Common myeloid progenitor, CD34-positive (primary cell): ENCODE measurements at regions of chr7 and their contacts with region 1.

Region 1: DNA sequence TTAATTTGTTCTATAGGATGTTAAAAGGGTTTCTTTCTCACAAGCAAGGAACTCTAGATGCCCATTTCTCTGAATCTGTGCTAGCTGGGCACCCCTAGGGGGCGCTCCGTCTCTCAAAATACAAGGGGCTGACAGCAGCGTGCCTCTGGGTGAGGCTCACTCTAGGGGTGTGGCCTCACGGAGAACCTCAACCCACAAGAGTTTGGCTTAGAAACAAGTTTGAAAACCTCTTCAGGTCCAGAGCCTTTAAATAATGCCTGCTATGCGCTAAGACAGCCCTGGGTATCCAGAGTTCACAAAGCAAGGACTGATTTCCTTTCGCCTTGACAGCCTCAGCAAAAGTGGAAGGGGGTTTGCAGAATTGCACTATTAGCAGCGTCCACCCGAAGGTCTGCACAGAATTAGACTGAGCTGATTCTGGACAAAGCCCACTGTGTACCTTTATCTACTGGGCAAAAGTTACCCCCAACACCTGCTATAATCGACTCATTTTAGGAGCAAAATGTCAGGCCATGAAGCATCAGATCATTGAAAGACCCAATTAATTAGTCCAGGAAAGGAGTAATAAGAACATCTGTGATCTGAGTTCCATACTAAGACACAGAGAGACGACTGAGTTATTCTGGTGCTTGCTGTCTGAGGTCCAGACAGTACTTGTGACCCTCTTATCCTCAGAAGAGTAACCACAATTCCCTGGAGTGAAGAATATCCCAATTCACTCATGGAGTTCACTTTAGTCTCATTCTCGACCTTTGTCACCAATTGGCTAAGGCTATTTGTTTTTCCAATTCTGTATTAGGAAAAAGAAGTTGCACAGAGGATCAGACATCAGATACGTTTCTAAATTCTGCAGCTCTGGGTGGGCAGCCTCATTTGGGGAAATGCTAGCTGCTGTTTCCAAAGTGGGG is 574 bp upstream of the CPED1 start:
- DNase-seq: peak; percentile 94 to 97 (median 96)
- H3K4me3 ChIP-seq: peak overlapping the region; percentile 26 to 87 (median 77)
- H3K27ac ChIP-seq: peak overlapping the region in 1 of 2 experiments; percentile 85
- H3K4me1 ChIP-seq: peaks cover 10 to 53% (median 28%) of the 10 kb centered on the region in 4 experiments
- H3K27me3 ChIP-seq: no peaks in the 10 kb centered on the region

Region 2: DNA sequence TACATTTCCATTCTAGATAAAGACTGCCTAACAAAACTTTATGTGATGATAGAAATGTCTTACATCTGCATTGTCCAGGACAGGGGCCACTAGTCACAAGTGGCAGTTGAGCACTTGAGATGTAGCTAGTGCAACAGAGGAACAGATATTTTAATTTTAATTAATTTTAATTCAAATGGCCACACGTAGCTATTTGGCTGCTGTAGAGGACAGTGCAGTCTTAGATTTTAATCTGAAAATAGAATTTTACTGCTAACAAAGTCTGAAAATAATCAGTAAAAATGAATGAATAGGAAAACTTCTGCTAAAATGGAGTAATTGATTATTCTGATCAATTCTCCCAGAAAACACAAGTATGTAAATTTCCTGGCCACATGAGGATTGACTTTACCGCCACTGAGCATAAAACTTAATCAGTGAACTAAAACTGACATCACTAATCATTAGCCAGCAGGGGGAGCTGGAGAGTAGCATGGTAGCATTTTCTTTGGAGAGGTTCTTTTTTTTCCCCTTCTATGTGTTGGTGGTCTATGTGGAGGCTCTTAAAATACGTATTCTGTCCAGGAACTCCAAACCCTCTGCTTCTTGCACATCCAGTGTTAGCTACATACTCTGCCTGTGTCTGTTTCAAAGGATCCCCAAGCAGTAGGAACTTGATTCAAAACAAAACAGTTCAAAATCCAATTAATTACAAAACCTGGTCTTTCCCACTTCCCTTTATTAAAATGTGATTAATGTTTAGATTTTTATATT is 182.1 kb before region 1 on chr7:
- CTCF ChIA-PET with region 1: interaction called, 11 read pairs
- POLR2A ChIA-PET with region 1: no interaction called
- DNase-seq: peak; percentile 75 to 85 (median 78)
- H3K4me3 ChIP-seq: peak overlapping the region in 1 of 7 experiments; percentile 14
- H3K27ac ChIP-seq: no peak overlapping the region
- H3K4me1 ChIP-seq: no peaks in the 10 kb centered on the region
- H3K27me3 ChIP-seq: no peaks in the 10 kb centered on the region

Region 3: DNA sequence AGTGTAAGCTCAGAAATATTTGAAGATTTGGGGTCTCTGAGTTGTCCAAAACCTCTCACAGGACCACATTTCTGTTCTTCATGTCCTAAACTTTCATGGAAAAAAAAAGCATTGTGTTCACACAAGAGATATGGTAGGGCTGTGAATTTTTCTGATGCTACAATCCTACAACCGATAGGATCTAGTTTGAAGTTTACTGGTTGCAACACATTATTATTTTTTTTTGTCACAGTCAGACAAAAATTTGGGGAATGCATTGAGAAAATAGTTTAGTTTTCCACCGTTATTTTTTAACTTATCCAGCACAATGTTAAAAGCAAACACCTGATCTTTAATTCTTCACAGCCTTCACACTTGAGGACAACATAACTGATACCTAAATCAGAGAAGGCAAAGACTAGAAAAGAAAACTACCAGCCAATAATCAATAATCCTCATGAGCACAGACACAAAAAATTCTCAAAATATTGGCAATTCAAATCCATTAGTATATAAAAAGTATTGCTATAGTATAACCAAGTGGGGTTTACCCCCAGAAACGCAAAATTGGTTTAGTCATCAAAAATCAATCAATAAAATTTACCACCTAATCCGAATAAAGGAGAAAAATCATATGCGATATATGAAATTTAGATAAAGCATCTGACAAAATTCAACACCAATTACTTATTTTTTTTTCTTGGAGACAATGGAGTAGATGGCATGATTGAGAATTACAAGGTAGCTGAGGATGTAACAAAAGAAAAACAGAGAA is 48.8 kb before region 1 on chr7:
- CTCF ChIA-PET with region 1: no interaction called
- POLR2A ChIA-PET with region 1: no interaction called
- DNase-seq: no peak
- H3K4me3 ChIP-seq: no peak overlapping the region
- H3K27ac ChIP-seq: no peak overlapping the region
- H3K4me1 ChIP-seq: peaks cover 0 to 10% (median 0%) of the 10 kb centered on the region in 4 experiments
- H3K27me3 ChIP-seq: no peaks in the 10 kb centered on the region

Region 4: GRCh38 chr7:121041516-121042148 is 53.7 kb after region 1 on chr7:
- CTCF ChIA-PET with region 1: interaction called, 21 read pairs
- POLR2A ChIA-PET with region 1: no interaction called
- DNase-seq: peak in 2 of 3 donors; percentile 13 to 40
- H3K4me3 ChIP-seq: peak overlapping the region in 2 of 7 experiments; percentile 13 to 55
- H3K27ac ChIP-seq: peak overlapping the region in 1 of 2 experiments; percentile 67
- H3K4me1 ChIP-seq: peaks cover 0 to 9% (median 5%) of the 10 kb centered on the region in 4 experiments
- H3K27me3 ChIP-seq: no peaks in the 10 kb centered on the region

Region 5: DNA sequence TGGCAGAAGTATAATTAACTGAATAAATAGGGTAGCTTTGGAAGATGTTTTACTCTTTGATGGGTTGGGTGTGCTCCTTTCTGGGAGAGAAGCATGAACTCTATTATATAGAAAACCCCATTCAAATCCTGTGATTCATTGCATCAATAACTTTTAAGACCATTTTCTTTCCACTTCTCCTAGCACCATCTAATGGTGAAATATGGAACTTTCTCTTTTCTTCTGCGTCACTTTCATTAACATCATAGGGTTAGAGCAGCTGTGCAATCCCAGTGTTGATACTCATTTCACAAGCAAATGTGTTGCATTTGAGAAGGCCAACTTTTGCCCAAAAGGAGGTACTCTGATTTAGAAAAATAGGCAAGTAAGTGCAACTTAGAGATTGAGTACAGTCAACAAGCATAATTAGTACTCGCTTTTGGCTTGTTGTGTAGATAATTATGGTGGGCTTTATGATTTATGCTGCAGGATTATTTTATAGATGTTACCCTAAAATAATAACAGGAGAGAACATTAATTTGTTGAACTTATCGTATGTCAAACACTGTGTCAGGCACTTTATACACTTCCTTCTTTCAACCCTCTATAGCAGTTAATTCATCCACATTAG is 93.5 kb after region 1 on chr7:
- CTCF ChIA-PET with region 1: interaction called, 193 read pairs
- POLR2A ChIA-PET with region 1: interaction called, 3 read pairs
- DNase-seq: peak; percentile 56 to 82 (median 77)
- H3K4me3 ChIP-seq: no peak overlapping the region
- H3K27ac ChIP-seq: no peak overlapping the region
- H3K4me1 ChIP-seq: peaks cover 0 to 8% (median 0%) of the 10 kb centered on the region in 4 experiments
- H3K27me3 ChIP-seq: no peaks in the 10 kb centered on the region

Region 6: DNA sequence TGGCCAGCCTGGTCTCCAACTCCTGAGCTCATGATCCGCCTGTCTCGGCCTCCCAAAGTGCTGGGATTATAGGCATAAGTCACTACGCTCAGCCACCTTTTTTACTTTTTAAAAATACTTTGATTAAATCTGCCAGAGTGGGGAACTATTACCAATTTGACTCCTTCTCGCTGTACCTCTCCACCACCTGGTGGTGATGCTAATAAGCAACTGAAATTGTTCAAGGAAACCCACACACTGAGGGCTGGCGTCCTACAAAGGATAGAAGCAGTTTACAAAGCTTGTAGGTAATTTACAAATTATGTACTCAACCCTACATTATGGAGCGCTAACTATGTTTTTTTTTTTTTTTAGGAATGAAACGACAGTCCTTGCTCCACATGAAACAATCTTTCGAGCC is 111.6 kb after region 1 on chr7:
- CTCF ChIA-PET with region 1: interaction called, 16 read pairs
- POLR2A ChIA-PET with region 1: no interaction called
- DNase-seq: peak; percentile 5 to 35 (median 15)
- H3K4me3 ChIP-seq: no peak overlapping the region
- H3K27ac ChIP-seq: no peak overlapping the region
- H3K4me1 ChIP-seq: no peaks in the 10 kb centered on the region
- H3K27me3 ChIP-seq: no peaks in the 10 kb centered on the region

Region 7: GRCh38 chr7:121138262-121138933 is 150.5 kb after region 1 on chr7:
- CTCF ChIA-PET with region 1: no interaction called
- POLR2A ChIA-PET with region 1: no interaction called
- DNase-seq: no peak
- H3K4me3 ChIP-seq: no peak overlapping the region
- H3K27ac ChIP-seq: peak overlapping the region in 1 of 2 experiments; percentile 23
- H3K4me1 ChIP-seq: no peaks in the 10 kb centered on the region
- H3K27me3 ChIP-seq: no peaks in the 10 kb centered on the region

Region 8: GRCh38 chr7:121373177-121373576 is 385.2 kb after region 1 on chr7:
- CTCF ChIA-PET with region 1: no interaction called
- POLR2A ChIA-PET with region 1: no interaction called
- DNase-seq: no peak
- H3K4me3 ChIP-seq: no peak overlapping the region
- H3K27ac ChIP-seq: peak overlapping the region in 1 of 2 experiments; percentile 38
- H3K4me1 ChIP-seq: peaks cover 4 to 13% (median 9%) of the 10 kb centered on the region in 4 experiments
- H3K27me3 ChIP-seq: no peaks in the 10 kb centered on the region